ENCODE measurements at regions of chr10 and their contacts with region 1.

Region 1: GRCh38 chr10:49538381-49539319 is at the start of gene ERCC6:
- DNase-seq: peak; percentile 99

Region 2: DNA sequence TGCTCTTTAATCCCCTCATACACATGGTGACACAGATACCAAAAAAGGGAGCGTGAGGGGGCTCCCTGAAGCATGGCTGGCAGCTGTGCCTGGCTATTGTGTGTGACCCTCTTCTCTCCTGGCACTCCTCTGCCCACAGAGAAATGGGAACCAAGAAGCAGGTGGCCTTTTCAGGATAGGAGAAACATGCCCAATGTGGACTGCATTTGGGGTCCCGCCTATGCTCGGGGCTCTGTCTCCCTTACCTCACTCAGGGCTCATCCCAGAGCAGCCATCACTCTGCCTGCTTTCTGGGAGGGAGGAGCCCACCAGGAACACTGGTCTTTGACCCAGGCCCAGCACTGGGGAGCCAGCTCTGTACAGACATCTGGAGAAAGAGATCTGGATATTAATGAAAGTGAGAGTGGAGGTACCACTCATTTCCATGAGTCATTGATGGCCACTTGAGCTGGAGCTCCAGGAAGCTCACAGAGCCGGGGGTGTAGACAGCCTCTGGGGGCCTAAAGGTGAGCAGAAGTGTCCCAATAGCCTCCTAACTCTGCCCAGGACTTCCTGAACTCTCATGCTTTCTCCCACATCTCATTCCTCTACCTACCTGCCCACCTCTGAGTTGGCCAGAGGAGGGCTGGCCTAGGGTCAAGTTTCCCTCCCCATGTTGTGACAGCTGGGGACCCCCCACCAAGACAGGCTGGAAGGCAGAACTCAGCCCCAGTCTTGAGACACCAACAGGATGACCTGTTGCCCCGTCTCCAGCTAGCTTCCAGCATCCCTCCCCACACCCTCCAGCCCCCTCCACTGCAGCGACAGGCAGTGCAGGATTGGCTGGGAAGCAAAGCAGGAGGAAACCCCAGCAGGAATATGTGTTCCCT is 185.4 kb before region 1 on chr10:
- CTCF ChIA-PET with region 1: no interaction called
- POLR2A ChIA-PET with region 1: no interaction called
- DNase-seq: no peak

Region 3: GRCh38 chr10:49524496-49524895 is 14.2 kb before region 1 on chr10:
- CTCF ChIA-PET with region 1: interaction called, 3 read pairs
- POLR2A ChIA-PET with region 1: interaction called, 10 read pairs
- DNase-seq: no peak

Region 4: GRCh38 chr10:49552249-49552672 is 13.6 kb after region 1 on chr10:
- CTCF ChIA-PET with region 1: interaction called, 3 read pairs
- POLR2A ChIA-PET with region 1: interaction called, 11 read pairs
- DNase-seq: no peak

Region 5: GRCh38 chr10:49612513-49613164 is 74.0 kb after region 1 on chr10:
- CTCF ChIA-PET with region 1: no interaction called
- POLR2A ChIA-PET with region 1: no interaction called
- DNase-seq: peak; percentile 49

Measured in HEK293T (cell line).